ENCODE measurements at regions of chr13 and their contacts with region 1.

Region 1: DNA sequence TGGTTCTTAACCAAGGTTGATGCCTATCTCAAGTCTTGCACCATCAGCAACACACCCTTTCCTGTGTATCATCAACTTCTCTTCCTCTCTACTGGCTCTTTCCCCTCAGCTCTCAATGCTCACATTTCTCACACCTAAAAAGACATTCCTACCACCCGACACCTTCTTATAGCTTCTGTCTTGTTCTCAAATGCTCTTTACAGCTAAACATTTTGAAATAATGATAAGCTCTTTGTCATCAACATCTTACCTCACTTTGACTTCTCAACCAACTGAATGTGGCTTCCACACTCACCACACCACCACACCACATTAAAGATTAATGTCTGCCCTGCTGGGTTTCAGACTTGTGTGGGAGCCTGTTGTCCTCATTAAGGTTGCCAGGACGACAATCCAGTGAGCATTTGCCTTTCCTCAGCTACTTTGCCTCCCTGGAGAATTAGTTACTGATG is 67.8 kb downstream of the RXFP2 start:
- DNase-seq: peak; percentile 72 to 84 (median 81)
- H3K4me3 ChIP-seq: no peak overlapping the region
- H3K4me3 Mint-ChIP-seq: peak overlapping the region; percentile 25 to 65 (median 46)
- H3K27ac ChIP-seq: peak overlapping the region; percentile 32
- H3K27ac Mint-ChIP-seq: peak overlapping the region; percentile 73 to 98 (median 92)
- H3K4me1 ChIP-seq: peaks cover 68% of the 10 kb centered on the region
- H3K4me1 Mint-ChIP-seq: peaks cover 22 to 63% (median 42%) of the 10 kb centered on the region in 4 donors
- H3K27me3 ChIP-seq: no peaks in the 10 kb centered on the region
- H3K27me3 Mint-ChIP-seq: no peaks in the 10 kb centered on the region

Region 2: GRCh38 chr13:31786011-31786410 is 21.1 kb before region 1 on chr13:
- CTCF ChIA-PET with region 1: no interaction called
- POLR2A ChIA-PET with region 1: no interaction called
- intact Hi-C with region 1: no loop called
- DNase-seq: no peak
- H3K4me3 ChIP-seq: no peak overlapping the region
- H3K4me3 Mint-ChIP-seq: no peak overlapping the region
- H3K27ac ChIP-seq: no peak overlapping the region
- H3K27ac Mint-ChIP-seq: no peak overlapping the region
- H3K4me1 ChIP-seq: no peaks in the 10 kb centered on the region
- H3K4me1 Mint-ChIP-seq: no peaks in the 10 kb centered on the region
- H3K27me3 ChIP-seq: no peaks in the 10 kb centered on the region
- H3K27me3 Mint-ChIP-seq: peaks cover 3 to 7% of the 10 kb centered on the region in 2 donors

Region 3: GRCh38 chr13:31824705-31825517 is 17.8 kb after region 1 on chr13:
- CTCF ChIA-PET with region 1: interaction called, 6 read pairs
- POLR2A ChIA-PET with region 1: interaction called, 4 read pairs
- intact Hi-C with region 1: loop called (anchors 2 kb)
- DNase-seq: peak in 4 of 5 donors; percentile 21 to 30 (median 26)
- H3K4me3 ChIP-seq: no peak overlapping the region
- H3K4me3 Mint-ChIP-seq: peak overlapping the region in 2 of 8 donors; percentile 17 to 46
- H3K27ac ChIP-seq: no peak overlapping the region
- H3K27ac Mint-ChIP-seq: peak overlapping the region in 5 of 7 donors; percentile 4 to 91 (median 52)
- H3K4me1 ChIP-seq: peaks cover 5% of the 10 kb centered on the region
- H3K4me1 Mint-ChIP-seq: peaks cover 4 to 13% (median 7%) of the 10 kb centered on the region in 4 donors
- H3K27me3 ChIP-seq: no peaks in the 10 kb centered on the region
- H3K27me3 Mint-ChIP-seq: no peaks in the 10 kb centered on the region

Region 4: DNA sequence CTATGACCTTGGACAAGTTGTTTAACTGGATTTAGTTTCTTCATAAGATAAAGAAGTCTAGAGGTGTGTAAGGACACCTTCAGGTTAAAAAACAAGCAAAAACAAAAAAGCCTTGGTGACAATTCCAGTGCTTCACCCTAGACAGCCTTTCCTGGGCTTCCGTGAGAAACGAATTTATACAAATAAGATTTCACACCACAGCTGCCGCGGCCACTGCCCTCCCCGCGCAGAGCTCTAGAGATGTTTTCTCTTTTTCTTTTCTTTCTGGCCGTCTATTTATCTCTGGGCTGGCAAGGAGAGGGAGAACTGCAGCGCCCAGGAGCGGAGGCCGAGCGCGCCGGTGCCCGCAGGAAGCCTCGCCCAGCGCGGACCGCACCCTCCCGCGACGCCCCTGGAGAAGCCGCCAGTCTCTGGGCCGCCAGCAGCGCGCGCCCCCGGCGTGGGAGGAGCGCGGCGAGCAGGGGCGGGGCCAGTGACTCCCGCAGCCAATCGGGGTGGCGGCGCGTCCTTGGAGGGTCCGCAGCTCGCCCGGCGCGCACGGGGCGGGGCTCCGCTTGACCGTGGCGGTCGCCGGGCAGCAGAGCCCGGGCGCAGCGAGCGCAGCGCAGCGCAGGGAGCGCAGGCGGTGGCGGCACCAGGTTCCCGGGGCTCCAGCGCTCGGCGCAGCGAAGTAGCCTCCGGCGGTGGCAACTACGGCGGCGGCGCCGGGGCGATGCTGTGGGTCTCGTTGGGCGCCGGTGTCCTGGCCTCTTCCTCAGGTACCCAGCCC is 39.2 kb after region 1 on chr13:
- CTCF ChIA-PET with region 1: no interaction called
- POLR2A ChIA-PET with region 1: interaction called, 8 read pairs
- intact Hi-C with region 1: loop called (anchors 1 kb)
- DNase-seq: peak; percentile 70 to 77 (median 76)
- H3K4me3 ChIP-seq: peak overlapping the region in 1 of 2 donors; percentile 44
- H3K4me3 Mint-ChIP-seq: peak overlapping the region; percentile 85 to 91 (median 87)
- H3K27ac ChIP-seq: peak overlapping the region; percentile 42
- H3K27ac Mint-ChIP-seq: peak overlapping the region; percentile 54 to 92 (median 80)
- H3K4me1 ChIP-seq: peaks cover 16% of the 10 kb centered on the region
- H3K4me1 Mint-ChIP-seq: peaks cover 19 to 50% (median 30%) of the 10 kb centered on the region in 4 donors
- H3K27me3 ChIP-seq: no peaks in the 10 kb centered on the region
- H3K27me3 Mint-ChIP-seq: peaks cover 0 to 14% of the 10 kb centered on the region in 2 donors

Region 5: DNA sequence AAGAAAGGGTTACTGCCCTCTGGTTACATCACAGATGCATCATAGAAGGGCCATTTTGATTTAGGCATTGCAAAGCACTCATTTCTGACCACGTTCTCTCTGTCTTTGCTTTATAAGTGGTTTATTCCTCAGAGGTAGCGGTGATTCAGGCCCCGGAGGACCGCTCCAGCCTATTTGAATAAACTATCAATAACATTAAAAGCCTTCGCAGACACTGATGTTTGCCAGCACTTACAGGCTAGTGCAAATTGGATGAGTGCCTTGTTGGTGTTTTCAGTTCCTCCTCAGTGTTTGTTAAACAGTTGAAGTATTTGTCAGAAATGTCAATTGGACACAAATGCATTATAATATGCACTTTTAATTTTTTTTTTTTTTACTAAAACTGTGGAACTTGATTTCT is 52.5 kb after region 1 on chr13:
- CTCF ChIA-PET with region 1: no interaction called
- POLR2A ChIA-PET with region 1: no interaction called
- intact Hi-C with region 1: no loop called
- DNase-seq: no peak
- H3K4me3 ChIP-seq: no peak overlapping the region
- H3K4me3 Mint-ChIP-seq: no peak overlapping the region
- H3K27ac ChIP-seq: no peak overlapping the region
- H3K27ac Mint-ChIP-seq: no peak overlapping the region
- H3K4me1 ChIP-seq: no peaks in the 10 kb centered on the region
- H3K4me1 Mint-ChIP-seq: peaks cover 2 to 6% (median 5%) of the 10 kb centered on the region in 4 donors
- H3K27me3 ChIP-seq: no peaks in the 10 kb centered on the region
- H3K27me3 Mint-ChIP-seq: peaks cover 0 to 3% of the 10 kb centered on the region in 2 donors

Measured in CD4-positive, alpha-beta memory T cell (primary cell).